ENCODE measurements at regions of chr17 and their contacts with region 1.

Region 1: GRCh38 chr17:69870091-69870530 is 204.9 kb upstream of the KCNJ16 start:
- DNase-seq: peak; percentile 83
- H3K4me3 ChIP-seq: no peak overlapping the region
- H3K27ac ChIP-seq: peak overlapping the region; percentile 39
- H3K4me1 ChIP-seq: peaks cover 38% of the 10 kb centered on the region
- H3K27me3 ChIP-seq: no peaks in the 10 kb centered on the region
- CTCF ChIP-seq: no peak
- POLR2A ChIP-seq: peak; percentile 26

Region 2: GRCh38 chr17:69501591-69502468 is 368.3 kb before region 1 on chr17:
- CTCF ChIA-PET with region 1: no interaction called
- POLR2A ChIA-PET with region 1: no interaction called
- dilution Hi-C with region 1: no loop called
- intact Hi-C with region 1: no loop called
- DNase-seq: peak; percentile 59
- H3K4me3 ChIP-seq: peak overlapping the region in 1 of 3 experiments; percentile 46
- H3K27ac ChIP-seq: peak overlapping the region; percentile 21
- H3K4me1 ChIP-seq: peaks cover 12% of the 10 kb centered on the region
- H3K27me3 ChIP-seq: no peaks in the 10 kb centered on the region
- CTCF ChIP-seq: no peak
- POLR2A ChIP-seq: no peak

Region 3: GRCh38 chr17:69672924-69673323 is 197.2 kb before region 1 on chr17:
- CTCF ChIA-PET with region 1: no interaction called
- POLR2A ChIA-PET with region 1: no interaction called
- dilution Hi-C with region 1: no loop called
- intact Hi-C with region 1: loop called (anchors 1 kb)
- DNase-seq: peak; percentile 81
- H3K4me3 ChIP-seq: no peak overlapping the region
- H3K27ac ChIP-seq: peak overlapping the region; percentile 70
- H3K4me1 ChIP-seq: peaks cover 18% of the 10 kb centered on the region
- H3K27me3 ChIP-seq: no peaks in the 10 kb centered on the region
- CTCF ChIP-seq: no peak
- POLR2A ChIP-seq: peak; percentile 65

Region 4: DNA sequence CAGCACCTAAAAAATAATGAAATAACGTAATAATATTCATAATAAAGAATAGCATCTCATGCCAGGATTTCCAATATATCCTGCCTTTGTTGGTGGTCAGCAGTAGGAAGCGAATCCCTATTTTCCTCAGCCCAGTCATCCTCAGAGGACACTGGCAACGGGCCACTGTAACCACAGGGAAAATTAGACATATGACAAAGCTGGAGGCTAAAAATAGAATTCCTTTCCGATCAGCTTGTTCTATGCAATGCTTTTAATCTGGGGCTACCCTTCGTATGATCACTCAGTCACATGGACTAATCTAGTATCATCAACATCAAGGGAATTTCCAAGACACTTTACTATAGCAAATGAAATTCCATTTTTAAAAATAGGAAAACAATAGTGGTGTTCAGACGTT is 42.0 kb before region 1 on chr17:
- CTCF ChIA-PET with region 1: interaction called, 5 read pairs
- POLR2A ChIA-PET with region 1: no interaction called
- dilution Hi-C with region 1: no loop called
- intact Hi-C with region 1: loop called (anchors 1 kb)
- DNase-seq: peak; percentile 97
- H3K4me3 ChIP-seq: peak overlapping the region in 1 of 3 experiments; percentile 12
- H3K27ac ChIP-seq: peak overlapping the region; percentile 89
- H3K4me1 ChIP-seq: peaks cover 20% of the 10 kb centered on the region
- H3K27me3 ChIP-seq: no peaks in the 10 kb centered on the region
- CTCF ChIP-seq: no peak
- POLR2A ChIP-seq: no peak

Region 5: DNA sequence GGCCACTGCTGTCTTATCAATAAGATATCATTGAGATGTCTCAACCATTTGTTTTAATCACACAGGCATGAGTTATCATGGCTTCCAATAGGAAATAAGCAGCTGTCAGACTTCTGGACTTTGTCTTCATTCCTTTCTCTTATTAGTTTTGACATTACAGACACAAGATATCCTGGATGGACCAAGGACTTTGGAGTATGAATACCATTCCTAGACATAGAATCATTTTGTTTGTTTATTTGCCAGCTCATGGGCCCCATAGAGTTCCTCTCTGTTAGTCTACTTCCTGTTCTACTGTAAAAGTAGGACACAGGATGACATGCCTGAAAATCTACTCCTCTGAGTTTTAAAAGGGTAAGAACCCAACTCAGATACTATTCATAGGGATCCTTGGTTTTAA is 127.2 kb after region 1 on chr17:
- CTCF ChIA-PET with region 1: no interaction called
- POLR2A ChIA-PET with region 1: no interaction called
- dilution Hi-C with region 1: no loop called
- intact Hi-C with region 1: no loop called
- DNase-seq: peak; percentile 44
- H3K4me3 ChIP-seq: no peak overlapping the region
- H3K27ac ChIP-seq: peak overlapping the region; percentile 28
- H3K4me1 ChIP-seq: peaks cover 14% of the 10 kb centered on the region
- H3K27me3 ChIP-seq: no peaks in the 10 kb centered on the region
- CTCF ChIP-seq: no peak
- POLR2A ChIP-seq: no peak

Region 6: DNA sequence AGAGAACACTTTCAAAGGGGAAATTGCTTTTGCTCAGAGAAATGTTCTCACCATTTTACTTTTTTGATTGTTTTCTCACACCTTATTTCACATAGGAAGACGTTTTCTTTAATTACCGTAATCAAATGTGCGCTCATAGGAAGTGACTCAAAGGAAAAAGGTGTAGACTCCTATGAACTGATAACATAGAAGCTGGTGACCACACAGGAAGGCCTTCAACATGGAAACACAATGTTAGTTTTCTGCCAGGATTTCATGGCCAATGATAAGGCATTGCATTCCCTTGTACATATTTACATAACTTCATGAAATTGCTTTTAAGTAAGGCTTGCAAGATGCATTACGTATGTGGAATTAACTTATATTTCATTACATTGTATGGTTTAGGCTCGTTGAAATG is 164.0 kb after region 1 on chr17:
- CTCF ChIA-PET with region 1: no interaction called
- POLR2A ChIA-PET with region 1: no interaction called
- dilution Hi-C with region 1: no loop called
- intact Hi-C with region 1: loop called (anchors 1 kb)
- DNase-seq: peak; percentile 98
- H3K4me3 ChIP-seq: no peak overlapping the region
- H3K27ac ChIP-seq: peak overlapping the region; percentile 90
- H3K4me1 ChIP-seq: peaks cover 17% of the 10 kb centered on the region
- H3K27me3 ChIP-seq: no peaks in the 10 kb centered on the region
- CTCF ChIP-seq: no peak
- POLR2A ChIP-seq: peak; percentile 68

Region 7: GRCh38 chr17:70110443-70110880 is 240.4 kb after region 1 on chr17:
- CTCF ChIA-PET with region 1: no interaction called
- POLR2A ChIA-PET with region 1: no interaction called
- dilution Hi-C with region 1: no loop called
- intact Hi-C with region 1: loop called (anchors 1 kb)
- DNase-seq: peak; percentile 99
- H3K4me3 ChIP-seq: no peak overlapping the region
- H3K27ac ChIP-seq: peak overlapping the region; percentile 82
- H3K4me1 ChIP-seq: peaks cover 27% of the 10 kb centered on the region
- H3K27me3 ChIP-seq: no peaks in the 10 kb centered on the region
- CTCF ChIP-seq: no peak
- POLR2A ChIP-seq: peak; percentile 42

Region 8: GRCh38 chr17:70563281-70563820 is 693.2 kb after region 1 on chr17:
- CTCF ChIA-PET with region 1: no interaction called
- POLR2A ChIA-PET with region 1: no interaction called
- dilution Hi-C with region 1: no loop called
- intact Hi-C with region 1: loop called (anchors 5 kb)
- DNase-seq: peak; percentile 92
- H3K4me3 ChIP-seq: peak overlapping the region in 1 of 3 experiments; percentile 30
- H3K27ac ChIP-seq: peak overlapping the region; percentile 25
- H3K4me1 ChIP-seq: peaks cover 31% of the 10 kb centered on the region
- H3K27me3 ChIP-seq: no peaks in the 10 kb centered on the region
- CTCF ChIP-seq: no peak
- POLR2A ChIP-seq: no peak